ENCODE measurements at regions of chr19 and their contacts with region 1.

Region 1: GRCh38 chr19:51921949-51922348 is 5.3 kb upstream of the ZNF613 start:
- DNase-seq: no peak
- H3K4me3 ChIP-seq: no peak overlapping the region
- H3K27ac ChIP-seq: no peak overlapping the region
- H3K4me1 ChIP-seq: no peaks in the 10 kb centered on the region
- H3K27me3 ChIP-seq: no peaks in the 10 kb centered on the region
- CTCF ChIP-seq: no peak
- POLR2A ChIP-seq: no peak

Region 2: GRCh38 chr19:51830274-51830673 is 91.7 kb before region 1 on chr19:
- intact Hi-C with region 1: no loop called
- DNase-seq: no peak
- H3K4me3 ChIP-seq: no peak overlapping the region
- H3K27ac ChIP-seq: no peak overlapping the region
- H3K4me1 ChIP-seq: no peaks in the 10 kb centered on the region
- H3K27me3 ChIP-seq: no peaks in the 10 kb centered on the region
- CTCF ChIP-seq: no peak
- POLR2A ChIP-seq: no peak

Region 3: DNA sequence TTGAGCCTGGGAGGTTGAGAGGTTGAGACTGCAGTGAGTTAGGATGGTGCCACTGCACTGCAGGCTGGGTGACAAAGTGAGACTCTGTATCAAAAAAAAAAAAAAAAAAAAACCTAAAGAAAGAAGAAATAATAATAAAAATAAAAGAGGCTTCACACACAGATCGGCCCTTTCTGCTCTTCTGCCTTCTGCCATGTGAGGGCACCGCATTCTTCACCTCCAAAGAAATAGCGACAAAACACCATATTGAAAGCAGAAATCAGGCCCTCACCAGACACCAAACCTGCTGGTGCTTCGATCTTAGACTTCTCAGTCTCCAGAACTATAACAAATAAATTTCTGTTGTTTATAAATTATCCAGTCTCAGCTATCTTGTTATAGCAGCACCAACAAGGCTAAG is 20.1 kb before region 1 on chr19:
- intact Hi-C with region 1: loop called (anchors 2 kb)
- DNase-seq: no peak
- H3K4me3 ChIP-seq: no peak overlapping the region
- H3K27ac ChIP-seq: no peak overlapping the region
- H3K4me1 ChIP-seq: peaks cover 15% of the 10 kb centered on the region
- H3K27me3 ChIP-seq: no peaks in the 10 kb centered on the region
- CTCF ChIP-seq: no peak
- POLR2A ChIP-seq: no peak